Activated B cell treated with CpG ODN at 0.5 μM for 24 hours (primary cell): ENCODE measurements at regions of chr12 and their contacts with region 1.

Region 1: DNA sequence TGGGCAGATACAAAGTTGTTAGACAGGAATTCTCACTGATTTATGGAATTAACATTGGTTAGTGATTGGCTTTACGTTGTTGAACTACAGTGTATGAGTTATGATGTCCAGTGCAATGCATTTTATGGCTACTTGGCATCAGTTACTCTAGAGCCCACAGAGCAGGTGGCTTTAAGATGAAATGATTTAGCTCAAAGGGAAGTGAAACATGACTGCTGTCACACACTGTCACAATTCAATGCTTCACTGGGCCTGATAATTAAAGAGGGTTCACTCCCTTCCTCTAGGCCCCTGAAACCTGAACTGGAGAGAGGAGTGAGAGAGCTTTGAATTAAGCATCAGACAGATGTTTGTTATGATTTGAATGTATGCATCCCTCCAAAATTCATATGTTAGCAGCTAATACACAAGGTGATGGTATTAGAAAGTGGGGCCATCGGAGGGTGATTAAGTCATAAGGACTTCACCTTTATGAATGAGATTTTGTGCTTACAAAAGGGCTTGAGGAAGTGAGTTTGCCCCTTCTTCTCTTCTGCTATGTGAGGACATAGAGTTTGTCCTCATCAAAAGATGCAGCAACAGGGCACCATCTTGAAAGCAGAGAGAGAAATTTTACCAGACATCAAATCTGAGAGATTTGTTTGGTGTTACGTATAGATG is 175.8 kb upstream of the GRIN2B start:
- DNase-seq: no peak
- ATAC-seq: peak; percentile 91
- H3K4me3 Mint-ChIP-seq: peak overlapping the region; percentile 62
- H3K27ac Mint-ChIP-seq: peak overlapping the region; percentile 97
- H3K4me1 Mint-ChIP-seq: peaks cover 71% of the 10 kb centered on the region
- H3K27me3 Mint-ChIP-seq: no peaks in the 10 kb centered on the region
- CTCF ChIP-seq: no peak

Region 2: DNA sequence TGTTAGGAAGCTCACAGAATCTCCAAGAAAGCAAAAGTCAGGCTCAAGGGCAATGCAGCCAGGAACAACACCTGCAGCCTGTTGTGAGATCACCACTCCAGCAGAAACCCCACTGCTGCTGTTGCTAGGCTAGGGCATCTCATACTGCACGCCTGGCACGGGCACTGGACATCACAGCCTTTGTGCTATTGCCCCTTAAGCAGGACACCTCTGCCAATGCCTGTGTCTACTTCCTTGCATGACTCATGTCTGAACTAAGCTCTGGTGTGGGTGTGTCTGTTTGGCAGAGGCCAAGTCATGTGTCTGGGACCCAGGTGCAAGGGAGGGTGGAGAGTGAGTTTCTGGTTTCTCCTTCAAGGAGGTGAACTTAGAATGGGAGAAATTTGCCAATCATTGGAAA is 1354.0 kb before region 1 on chr12:
- CTCF ChIA-PET with region 1: no interaction called
- POLR2A ChIA-PET with region 1: no interaction called
- intact Hi-C with region 1: loop called (anchors 2 kb)
- DNase-seq: no peak
- ATAC-seq: peak; percentile 70
- H3K4me3 Mint-ChIP-seq: peak overlapping the region; percentile 12
- H3K27ac Mint-ChIP-seq: peak overlapping the region; percentile 6
- H3K4me1 Mint-ChIP-seq: peaks cover 65% of the 10 kb centered on the region
- H3K27me3 Mint-ChIP-seq: no peaks in the 10 kb centered on the region
- CTCF ChIP-seq: no peak

Region 3: GRCh38 chr12:14111230-14111865 is 45.9 kb before region 1 on chr12:
- CTCF ChIA-PET with region 1: interaction called, 4 read pairs
- POLR2A ChIA-PET with region 1: interaction called, 3 read pairs
- intact Hi-C with region 1: loop called (anchors 2 kb)
- DNase-seq: peak; percentile 21
- ATAC-seq: peak; percentile 96
- H3K4me3 Mint-ChIP-seq: no peak overlapping the region
- H3K27ac Mint-ChIP-seq: peak overlapping the region; percentile 18
- H3K4me1 Mint-ChIP-seq: peaks cover 13% of the 10 kb centered on the region
- H3K27me3 Mint-ChIP-seq: no peaks in the 10 kb centered on the region
- CTCF ChIP-seq: no peak

Region 4: GRCh38 chr12:14138495-14138894 is 18.7 kb before region 1 on chr12:
- CTCF ChIA-PET with region 1: interaction called, 5 read pairs
- POLR2A ChIA-PET with region 1: interaction called, 5 read pairs
- intact Hi-C with region 1: loop called (anchors 2 kb)
- DNase-seq: no peak
- ATAC-seq: peak; percentile 74
- H3K4me3 Mint-ChIP-seq: no peak overlapping the region
- H3K27ac Mint-ChIP-seq: no peak overlapping the region
- H3K4me1 Mint-ChIP-seq: peaks cover under 1% of the 10 kb centered on the region
- H3K27me3 Mint-ChIP-seq: no peaks in the 10 kb centered on the region
- CTCF ChIP-seq: no peak

Region 5: DNA sequence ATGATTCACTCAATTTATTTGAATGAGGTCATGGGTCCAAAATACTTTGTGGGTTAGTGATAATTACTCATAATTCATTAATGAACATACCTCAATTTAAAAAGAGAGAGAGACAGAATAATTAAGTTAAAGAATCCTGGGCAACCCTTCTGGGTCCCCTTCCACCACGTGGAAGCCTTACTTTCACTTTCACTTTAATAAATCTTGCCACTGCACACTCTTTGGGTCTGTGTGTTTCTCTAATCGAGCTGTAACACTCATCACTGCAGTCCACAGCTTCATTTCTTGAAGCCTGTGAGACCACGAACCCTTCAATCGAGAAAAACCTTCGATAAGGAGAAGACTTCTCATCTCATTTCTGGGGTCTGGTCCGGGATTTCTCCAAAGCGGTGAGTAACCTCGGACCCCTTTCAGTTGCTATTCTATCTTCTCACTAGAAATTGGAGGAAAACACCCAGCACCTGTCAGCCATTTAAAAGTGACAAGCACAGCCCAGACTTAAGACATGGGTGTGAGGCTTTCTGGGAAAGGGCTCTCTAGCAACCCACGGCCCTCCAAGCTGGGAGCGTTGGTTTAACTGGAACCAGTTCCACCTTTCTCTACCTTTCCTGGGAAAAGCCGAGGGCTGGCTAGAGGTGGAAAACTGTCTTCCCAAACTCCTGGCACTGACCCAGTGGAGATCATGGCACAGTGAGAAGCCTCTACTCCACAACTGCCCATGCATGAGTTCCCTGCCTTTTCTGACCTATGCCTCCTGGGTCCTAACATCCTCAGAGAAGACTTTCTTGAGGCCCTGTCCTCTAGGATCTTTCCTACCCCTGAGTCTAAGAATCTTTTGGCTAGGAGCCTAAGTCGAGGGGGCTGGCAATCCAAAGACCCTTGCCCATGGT is 59.4 kb after region 1 on chr12:
- CTCF ChIA-PET with region 1: no interaction called
- POLR2A ChIA-PET with region 1: no interaction called
- intact Hi-C with region 1: loop called (anchors 1 kb)
- DNase-seq: no peak
- ATAC-seq: peak; percentile 62
- H3K4me3 Mint-ChIP-seq: peak overlapping the region; percentile 70
- H3K27ac Mint-ChIP-seq: peak overlapping the region; percentile 82
- H3K4me1 Mint-ChIP-seq: peaks cover 34% of the 10 kb centered on the region
- H3K27me3 Mint-ChIP-seq: no peaks in the 10 kb centered on the region
- CTCF ChIP-seq: no peak

Region 6: DNA sequence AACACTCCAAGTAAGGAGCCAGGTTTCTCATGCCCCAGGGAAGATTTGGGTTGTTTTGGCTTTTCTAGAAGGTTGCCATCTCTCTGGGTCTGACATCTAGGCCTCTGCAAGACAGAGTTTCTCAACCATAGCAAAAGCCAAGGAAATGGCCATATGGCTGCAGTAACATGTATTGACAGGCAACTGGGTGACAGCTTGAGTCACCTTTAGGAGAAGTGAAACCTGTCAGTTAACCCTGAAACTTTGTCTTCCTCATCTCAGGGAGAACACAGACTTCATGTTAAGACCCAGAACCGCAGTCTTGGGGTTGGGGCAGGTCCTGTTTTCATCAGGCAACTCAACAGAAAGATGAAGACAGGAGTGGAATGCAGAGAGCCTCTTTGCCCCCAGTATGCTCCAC is 456.5 kb after region 1 on chr12:
- CTCF ChIA-PET with region 1: no interaction called
- POLR2A ChIA-PET with region 1: no interaction called
- intact Hi-C with region 1: loop called (anchors 1 kb)
- DNase-seq: peak; percentile 34
- ATAC-seq: peak; percentile 86
- H3K4me3 Mint-ChIP-seq: peak overlapping the region; percentile 60
- H3K27ac Mint-ChIP-seq: peak overlapping the region; percentile 93
- H3K4me1 Mint-ChIP-seq: peaks cover 38% of the 10 kb centered on the region
- H3K27me3 Mint-ChIP-seq: no peaks in the 10 kb centered on the region
- CTCF ChIP-seq: no peak

Region 7: DNA sequence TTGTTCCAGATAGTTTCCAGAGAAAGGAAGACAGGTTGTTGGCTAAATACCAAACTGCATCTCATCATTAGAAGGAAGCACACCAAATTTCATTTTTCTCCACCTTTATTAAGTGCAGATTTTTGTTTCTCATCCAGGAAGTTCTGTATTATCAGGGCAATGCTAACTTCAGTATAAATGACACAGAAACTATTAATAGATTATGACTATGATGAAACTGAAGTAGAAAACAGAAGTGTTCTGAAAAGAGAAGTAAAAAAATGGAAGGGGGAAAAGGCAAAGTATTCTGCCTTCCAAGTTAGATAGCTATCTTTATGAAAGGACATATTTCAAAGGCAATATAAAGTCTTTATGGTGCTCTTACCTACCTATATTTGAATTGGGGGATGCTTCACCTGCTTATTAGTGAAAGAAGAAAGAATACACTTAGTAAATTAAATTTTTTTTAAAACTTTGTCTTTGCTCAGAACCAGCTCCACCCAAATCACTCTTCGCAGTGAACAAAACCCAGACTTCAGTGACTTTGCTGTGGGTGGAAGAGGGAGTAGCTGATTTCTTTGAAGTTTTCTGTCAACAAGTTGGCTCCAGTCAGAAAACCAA is 1389.0 kb after region 1 on chr12:
- CTCF ChIA-PET with region 1: no interaction called
- POLR2A ChIA-PET with region 1: interaction called, 5 read pairs
- intact Hi-C with region 1: loop called (anchors 10 kb)
- DNase-seq: no peak
- ATAC-seq: peak; percentile 76
- H3K4me3 Mint-ChIP-seq: peak overlapping the region; percentile 87
- H3K27ac Mint-ChIP-seq: peak overlapping the region; percentile 99
- H3K4me1 Mint-ChIP-seq: peaks cover 60% of the 10 kb centered on the region
- H3K27me3 Mint-ChIP-seq: no peaks in the 10 kb centered on the region
- CTCF ChIP-seq: no peak